Right lobe of liver (tissue), 6 donors: ENCODE measurements at regions of chr17 and their contacts with region 1.

Region 1: DNA sequence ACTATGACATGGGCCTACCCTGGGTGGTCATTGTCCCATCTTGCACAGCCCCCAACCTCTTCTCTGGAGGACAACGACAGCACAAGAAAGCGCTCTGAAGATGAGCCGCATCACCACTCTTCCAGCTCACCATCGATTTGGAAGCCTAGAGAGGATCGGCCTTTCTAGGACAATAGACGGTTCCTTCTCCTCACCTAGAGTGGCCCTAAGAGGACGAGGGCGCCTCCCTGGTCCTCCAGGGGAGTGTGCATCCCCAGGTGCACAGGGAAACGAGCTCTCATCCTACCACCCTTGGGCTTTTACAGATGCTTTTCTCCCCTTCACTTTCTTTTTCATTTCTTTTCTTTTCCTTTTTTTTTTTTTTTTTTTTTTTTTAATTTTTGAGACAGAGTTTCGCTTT is 20.3 kb upstream of the SLC52A1 start:
- DNase-seq: no peak
- ATAC-seq: no peak
- H3K4me3 ChIP-seq: no peak overlapping the region
- H3K27ac ChIP-seq: no peak overlapping the region
- H3K4me1 ChIP-seq: no peaks in the 10 kb centered on the region
- H3K27me3 ChIP-seq: no peaks in the 10 kb centered on the region
- CTCF ChIP-seq: no peak
- POLR2A ChIP-seq: no peak

Region 2: DNA sequence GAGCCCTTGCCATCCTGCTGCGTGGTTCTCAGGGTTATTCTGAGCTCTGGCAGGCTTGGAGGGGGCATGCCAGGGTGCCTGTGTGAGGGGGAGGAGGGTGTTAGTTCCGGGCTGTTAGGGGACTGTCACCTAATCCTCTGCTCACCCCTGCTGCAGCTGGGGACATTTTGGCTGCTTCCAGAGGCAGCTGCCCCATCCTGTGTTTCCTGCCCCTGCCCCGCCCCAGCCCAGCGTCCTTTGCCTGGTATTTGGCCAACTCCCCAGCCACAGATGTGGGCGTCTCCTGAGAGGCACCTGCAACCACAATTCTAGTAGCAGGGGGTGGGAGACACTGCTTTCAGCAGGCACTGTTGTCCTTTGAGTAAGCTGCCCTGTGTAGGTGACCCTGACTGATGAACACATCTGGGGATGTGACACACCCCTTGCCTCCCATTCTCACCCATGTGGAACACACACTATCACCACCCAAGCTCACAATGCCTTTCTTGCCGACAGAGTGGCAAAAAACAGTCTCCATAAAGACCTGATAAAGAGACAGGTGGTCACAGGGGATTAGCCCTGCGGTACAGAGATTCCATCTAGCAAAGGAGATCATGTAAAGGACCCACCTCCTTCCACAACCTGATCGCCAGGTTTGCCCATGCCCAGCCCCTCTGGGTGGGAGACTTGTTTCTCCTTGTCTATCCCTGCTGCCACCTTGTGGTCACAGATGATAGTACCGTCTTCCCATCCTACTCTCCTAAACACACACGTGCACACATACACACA is 152.3 kb before region 1 on chr17 and contains the start of gene CHRNE:
- intact Hi-C with region 1: loop called in 1 of 2 experiments (anchors 5 kb)
- DNase-seq: peak; percentile 60 to 83 (median 68)
- ATAC-seq: peak; percentile 45 to 57 (median 47)
- H3K4me3 ChIP-seq: peak within 1 kb of the TSS in 1 of 3 donors; percentile 27
- H3K27ac ChIP-seq: peak within 1 kb of the TSS in 2 of 3 donors; percentile 43 to 75
- H3K4me1 ChIP-seq: peaks cover 0 to 23% (median 12%) of the 10 kb centered on the region in 4 donors
- H3K27me3 ChIP-seq: no peaks in the 10 kb centered on the region
- CTCF ChIP-seq: peak; percentile 70 to 84 (median 76)
- POLR2A ChIP-seq: no peak
- total RNA-seq, gene CHRNE: 1.4 to 2.9 (median 2.0) TPM

Region 3: DNA sequence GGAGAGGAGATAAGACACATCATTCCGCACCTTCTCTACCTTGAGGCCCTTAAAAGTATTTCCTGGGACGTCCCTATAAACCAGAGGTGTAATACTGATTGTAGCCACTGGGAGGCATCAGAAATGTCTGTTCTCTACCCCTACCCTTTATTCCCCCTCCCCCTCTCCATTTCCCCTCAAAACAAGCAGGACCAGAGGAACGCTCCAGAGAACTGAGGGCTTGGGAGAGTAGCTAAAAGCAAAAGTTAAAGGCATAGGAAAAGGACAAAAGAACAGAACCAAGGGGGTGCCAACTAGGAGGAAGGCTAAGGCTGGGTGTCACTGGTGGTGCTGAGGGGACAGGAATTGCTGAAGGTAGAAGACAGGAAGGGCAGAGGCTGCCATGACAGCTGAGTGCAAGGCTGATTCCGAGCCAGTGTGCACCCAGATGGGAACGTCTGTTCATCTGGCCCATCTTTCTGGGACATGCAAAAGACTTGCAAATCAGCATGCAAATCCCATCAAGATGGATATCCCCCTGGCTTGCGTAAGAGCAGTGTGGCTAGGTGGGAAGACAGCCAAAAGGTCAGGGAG is 74.8 kb before region 1 on chr17:
- intact Hi-C with region 1: loop called (anchors 5 to 10 kb)
- DNase-seq: no peak
- ATAC-seq: peak; percentile 67 to 79 (median 76)
- H3K4me3 ChIP-seq: no peak overlapping the region
- H3K27ac ChIP-seq: no peak overlapping the region
- H3K4me1 ChIP-seq: no peaks in the 10 kb centered on the region
- H3K27me3 ChIP-seq: no peaks in the 10 kb centered on the region
- CTCF ChIP-seq: peak; percentile 65 to 77 (median 68)
- POLR2A ChIP-seq: no peak